Adrenal gland (tissue), 19 donors: ENCODE measurements at regions of chr5 and their contacts with region 1.

Region 1: GRCh38 chr5:32329308-32329834 is 16.6 kb upstream of the MTMR12 start:
- DNase-seq: peak; percentile 54 to 88 (median 76)
- H3K4me3 ChIP-seq: no peak overlapping the region
- H3K27ac ChIP-seq: no peak overlapping the region
- H3K4me1 ChIP-seq: peaks cover 0 to 4% of the 10 kb centered on the region in 2 donors
- H3K27me3 ChIP-seq: no peaks in the 10 kb centered on the region
- CTCF ChIP-seq: peak; percentile 63 to 81 (median 77)
- POLR2A ChIP-seq: no peak

Region 2: GRCh38 chr5:32232441-32233219 is 96.7 kb before region 1 on chr5:
- intact Hi-C with region 1: loop called (anchors 2 to 5 kb)
- DNase-seq: peak; percentile 81 to 93 (median 86)
- H3K4me3 ChIP-seq: no peak overlapping the region
- H3K27ac ChIP-seq: peak overlapping the region in 3 of 5 donors; percentile 65 to 89 (median 69)
- H3K4me1 ChIP-seq: peaks cover 19 to 33% of the 10 kb centered on the region in 2 donors
- H3K27me3 ChIP-seq: no peaks in the 10 kb centered on the region
- CTCF ChIP-seq: peak; percentile 83 to 94 (median 88)
- POLR2A ChIP-seq: no peak

Region 3: DNA sequence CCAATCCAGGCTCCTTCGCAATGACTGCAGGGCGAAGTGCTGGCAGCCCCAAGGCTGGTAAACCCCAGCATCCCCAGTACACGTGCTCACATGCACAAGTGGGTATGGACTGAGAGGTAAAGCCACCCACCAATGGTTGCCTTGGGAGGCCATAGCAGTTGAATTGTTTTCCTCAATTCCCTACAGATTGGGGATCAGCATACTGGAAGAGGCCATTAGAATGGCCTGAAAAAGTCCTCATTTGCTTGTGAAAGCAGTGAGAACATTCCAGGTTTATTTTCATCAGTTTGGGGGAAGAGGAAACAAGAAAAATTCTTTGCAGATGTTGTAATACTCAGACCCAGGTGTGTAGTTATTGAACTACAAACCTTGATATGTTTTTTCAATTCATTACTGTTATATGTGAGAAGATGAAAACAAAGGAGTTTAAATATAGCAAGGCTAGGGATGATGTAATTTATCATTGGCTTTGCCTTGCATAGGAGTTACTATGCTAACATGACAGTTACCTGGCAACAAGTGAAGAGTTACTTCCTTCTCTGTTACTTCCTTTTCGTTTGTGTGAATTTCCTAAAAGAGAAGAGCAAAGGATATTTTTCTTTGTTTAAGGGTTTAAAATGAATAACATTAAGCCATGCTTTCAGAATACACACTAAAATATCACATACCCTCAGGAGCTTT is 53.1 kb before region 1 on chr5:
- intact Hi-C with region 1: loop called in 1 of 2 experiments (anchors 10 kb)
- DNase-seq: peak in 1 of 7 donors; percentile 25
- H3K4me3 ChIP-seq: no peak overlapping the region
- H3K27ac ChIP-seq: peak overlapping the region in 3 of 5 donors; percentile 8 to 56 (median 32)
- H3K4me1 ChIP-seq: peaks cover 25 to 32% of the 10 kb centered on the region in 2 donors
- H3K27me3 ChIP-seq: no peaks in the 10 kb centered on the region
- CTCF ChIP-seq: no peak
- POLR2A ChIP-seq: no peak

Region 4: DNA sequence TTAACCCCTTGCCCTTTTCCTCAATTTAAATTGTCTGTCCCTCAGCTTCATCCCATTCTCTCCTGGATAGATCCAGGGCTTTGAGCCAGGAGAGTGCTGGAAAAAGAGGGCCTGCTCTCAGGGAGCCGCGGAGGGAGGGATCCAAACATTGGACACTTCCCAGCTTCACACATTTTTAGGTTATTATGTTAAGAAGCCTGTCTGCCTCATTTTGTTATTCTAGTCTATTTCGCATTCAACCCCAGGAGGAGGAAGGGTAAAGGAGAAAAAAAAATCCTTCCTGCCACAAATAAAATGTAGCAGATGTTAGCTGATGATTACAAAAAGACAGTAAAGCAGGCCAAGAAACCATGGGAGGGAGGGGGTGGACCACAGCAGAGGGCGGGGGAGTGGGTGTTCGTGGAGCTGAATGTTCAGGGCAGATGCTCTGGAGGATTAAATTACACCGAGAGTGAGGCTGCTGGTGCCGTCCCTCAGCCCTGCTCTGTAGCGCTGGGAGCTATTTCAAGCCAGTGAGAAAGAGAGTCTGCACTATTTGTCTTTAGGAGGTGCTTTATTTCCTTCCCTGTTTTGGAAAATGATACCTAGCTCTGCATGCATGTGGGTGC is 175.7 kb after region 1 on chr5:
- intact Hi-C with region 1: no loop called
- DNase-seq: peak; percentile 26 to 86 (median 32)
- H3K4me3 ChIP-seq: no peak overlapping the region
- H3K27ac ChIP-seq: peak overlapping the region in 3 of 5 donors; percentile 13 to 58 (median 24)
- H3K4me1 ChIP-seq: peaks cover 0 to 15% of the 10 kb centered on the region in 2 donors
- H3K27me3 ChIP-seq: no peaks in the 10 kb centered on the region
- CTCF ChIP-seq: no peak
- POLR2A ChIP-seq: no peak